Lower leg skin (tissue), 4 donors: ENCODE measurements at regions of chr22 and their contacts with region 1.

Region 1: GRCh38 chr22:49709464-49709863 is 118.2 kb downstream of the BRD1 start:
- DNase-seq: no peak
- H3K4me3 ChIP-seq: no peak overlapping the region
- CTCF ChIP-seq: no peak
- POLR2A ChIP-seq: no peak

Region 2: DNA sequence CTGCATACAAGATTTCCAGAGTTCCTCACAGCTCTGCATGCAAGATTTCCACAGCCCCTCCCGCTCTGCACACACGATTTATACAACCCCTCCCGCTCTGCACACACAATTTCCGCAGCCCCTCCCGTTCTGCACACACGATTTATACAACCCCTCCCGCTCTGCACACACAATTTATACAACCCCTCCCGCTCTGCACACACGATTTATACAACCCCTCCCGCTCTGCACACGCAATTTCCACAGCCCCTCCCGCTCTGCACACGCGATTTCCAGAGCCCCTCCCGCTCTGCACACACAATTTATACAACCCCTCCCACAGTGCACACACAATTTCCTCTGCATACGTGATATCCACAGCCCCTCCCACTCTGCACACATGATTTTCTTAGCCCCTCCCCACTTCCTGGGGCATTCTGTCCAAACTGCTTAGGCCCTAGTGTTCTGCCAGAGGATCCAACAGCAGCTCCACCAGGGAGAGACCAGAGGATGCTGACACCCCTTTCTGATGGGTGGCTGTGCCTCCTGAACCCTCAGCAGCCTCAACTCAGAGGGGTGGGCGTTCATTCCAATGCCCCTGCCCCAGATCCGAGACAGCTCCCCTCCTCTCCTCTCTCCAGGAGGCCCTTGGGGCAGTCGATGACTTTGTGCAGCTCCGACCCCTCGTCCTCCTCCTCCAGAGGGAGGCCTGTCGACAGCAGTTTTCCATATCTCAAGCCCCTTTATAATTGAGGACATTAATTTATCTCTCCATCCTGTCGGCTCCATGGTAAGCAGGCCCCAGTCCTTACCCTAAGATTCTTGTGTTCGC is 553.5 kb before region 1 on chr22:
- intact Hi-C with region 1: loop called (anchors 2 kb)
- DNase-seq: no peak
- H3K4me3 ChIP-seq: no peak overlapping the region
- CTCF ChIP-seq: no peak
- POLR2A ChIP-seq: no peak